ENCODE measurements at regions of chr10 and their contacts with region 1.

Region 1: DNA sequence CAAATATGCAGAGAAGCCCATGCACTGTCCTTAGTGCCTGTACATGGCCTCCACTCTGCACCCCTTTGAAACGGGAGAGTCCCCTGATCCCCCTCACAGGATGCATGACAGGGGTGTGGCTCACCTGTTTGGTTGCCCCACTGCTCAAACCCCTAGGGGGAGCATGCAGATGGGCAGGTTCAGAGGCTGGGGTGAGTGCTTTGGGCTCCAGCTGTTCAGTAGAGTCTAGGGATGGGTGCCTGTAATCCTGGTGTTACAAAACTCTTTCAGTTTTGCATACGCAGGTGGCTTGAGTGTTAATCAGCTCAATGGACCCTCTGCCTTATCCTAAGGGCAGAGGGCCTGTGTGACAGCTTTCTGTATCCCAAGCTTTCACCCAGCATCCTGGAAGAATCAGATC is 7.8 kb upstream of the SFTPA1 start:
- DNase-seq: no peak
- ATAC-seq: no peak
- H3K4me3 ChIP-seq: no peak overlapping the region
- H3K4me3 Mint-ChIP-seq: no peak overlapping the region
- H3K27ac ChIP-seq: no peak overlapping the region
- H3K27ac Mint-ChIP-seq: no peak overlapping the region
- H3K4me1 ChIP-seq: no peaks in the 10 kb centered on the region
- H3K4me1 Mint-ChIP-seq: no peaks in the 10 kb centered on the region
- H3K27me3 ChIP-seq: no peaks in the 10 kb centered on the region
- H3K27me3 Mint-ChIP-seq: peaks cover 4 to 7% of the 10 kb centered on the region in 2 donors

Region 2: DNA sequence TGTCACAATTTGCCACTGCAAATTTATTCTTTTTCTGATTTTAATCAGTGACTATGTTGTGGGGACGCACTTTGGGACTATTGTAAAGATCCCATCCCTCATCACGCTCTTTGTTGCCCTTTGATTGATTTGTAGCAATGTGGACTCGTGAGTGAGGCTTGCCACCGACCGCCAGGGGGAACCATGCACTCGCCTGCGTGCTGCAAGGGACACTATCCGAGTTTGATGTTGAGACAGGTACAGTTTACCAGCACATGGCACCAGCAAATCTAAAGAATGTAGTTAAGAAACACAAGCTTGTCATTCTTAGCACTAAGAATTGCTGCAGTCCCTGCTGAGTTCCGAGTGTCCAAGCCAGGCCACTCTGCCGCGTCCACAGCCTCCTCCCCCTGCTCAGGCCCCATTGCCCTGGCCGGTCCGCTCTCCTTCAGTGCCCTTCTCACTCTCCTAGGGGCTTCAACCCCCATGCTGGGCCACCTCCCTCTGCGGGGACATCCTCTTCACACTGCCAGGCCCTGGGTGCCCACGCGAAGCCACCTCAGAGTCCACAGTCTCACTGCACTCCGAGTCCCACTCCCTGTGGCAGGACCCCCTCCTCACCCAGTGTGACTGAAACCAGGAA is 40.7 kb before region 1 on chr10:
- CTCF ChIA-PET with region 1: no interaction called
- POLR2A ChIA-PET with region 1: interaction called in 1 of 2 experiments, 15 read pairs
- DNase-seq: peak; percentile 16 to 67 (median 50)
- ATAC-seq: peak; percentile 50 to 75 (median 62)
- H3K4me3 ChIP-seq: no peak overlapping the region
- H3K4me3 Mint-ChIP-seq: peak overlapping the region in 1 of 3 donors; percentile 31
- H3K27ac ChIP-seq: no peak overlapping the region
- H3K27ac Mint-ChIP-seq: no peak overlapping the region
- H3K4me1 ChIP-seq: no peaks in the 10 kb centered on the region
- H3K4me1 Mint-ChIP-seq: peaks cover 2 to 11% (median 7%) of the 10 kb centered on the region in 3 donors
- H3K27me3 ChIP-seq: peaks cover 0 to 9% of the 10 kb centered on the region in 2 experiments
- H3K27me3 Mint-ChIP-seq: peaks cover 19 to 20% of the 10 kb centered on the region in 2 donors